ENCODE measurements at regions of chr1 and their contacts with region 1.

Region 1: GRCh38 chr1:17732475-17732874 is 22.7 kb upstream of the ACTL8 start:
- DNase-seq: no peak
- ATAC-seq: no peak
- H3K4me3 ChIP-seq: no peak overlapping the region
- H3K27ac ChIP-seq: no peak overlapping the region
- H3K4me1 ChIP-seq: no peaks in the 10 kb centered on the region
- H3K27me3 ChIP-seq: no peaks in the 10 kb centered on the region

Region 2: GRCh38 chr1:17881761-17882160 is 149.3 kb after region 1 on chr1:
- intact Hi-C with region 1: loop called in 1 of 2 experiments (anchors 10 kb)
- DNase-seq: no peak
- ATAC-seq: peak; percentile 33
- H3K4me3 ChIP-seq: no peak overlapping the region
- H3K27ac ChIP-seq: no peak overlapping the region
- H3K4me1 ChIP-seq: no peaks in the 10 kb centered on the region
- H3K27me3 ChIP-seq: no peaks in the 10 kb centered on the region

Region 3: DNA sequence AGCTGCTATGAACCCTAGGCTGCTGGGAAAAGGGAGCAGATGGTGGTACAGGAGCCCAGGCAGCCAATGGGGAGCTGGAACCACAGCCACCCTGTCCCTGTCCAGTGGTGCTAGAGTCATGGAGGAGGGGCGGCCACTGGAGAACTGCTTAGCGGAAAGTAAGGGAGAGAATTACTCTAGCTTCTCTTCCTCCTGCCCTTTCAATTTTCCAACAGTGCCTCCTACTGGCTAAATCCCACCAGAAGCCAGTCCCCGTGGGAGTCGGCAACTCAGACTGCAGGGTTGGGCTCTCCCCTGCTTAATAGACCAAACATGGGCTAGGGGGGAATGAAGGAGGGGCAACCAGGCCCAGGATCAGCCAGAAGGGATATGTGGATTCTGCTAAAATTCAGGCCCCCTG is 177.2 kb after region 1 on chr1:
- intact Hi-C with region 1: no loop called
- DNase-seq: no peak
- ATAC-seq: no peak
- H3K4me3 ChIP-seq: no peak overlapping the region
- H3K27ac ChIP-seq: no peak overlapping the region
- H3K4me1 ChIP-seq: no peaks in the 10 kb centered on the region
- H3K27me3 ChIP-seq: no peaks in the 10 kb centered on the region